MCF 10A (cell line): ENCODE measurements at regions of chr9 and their contacts with region 1.

Region 1: DNA sequence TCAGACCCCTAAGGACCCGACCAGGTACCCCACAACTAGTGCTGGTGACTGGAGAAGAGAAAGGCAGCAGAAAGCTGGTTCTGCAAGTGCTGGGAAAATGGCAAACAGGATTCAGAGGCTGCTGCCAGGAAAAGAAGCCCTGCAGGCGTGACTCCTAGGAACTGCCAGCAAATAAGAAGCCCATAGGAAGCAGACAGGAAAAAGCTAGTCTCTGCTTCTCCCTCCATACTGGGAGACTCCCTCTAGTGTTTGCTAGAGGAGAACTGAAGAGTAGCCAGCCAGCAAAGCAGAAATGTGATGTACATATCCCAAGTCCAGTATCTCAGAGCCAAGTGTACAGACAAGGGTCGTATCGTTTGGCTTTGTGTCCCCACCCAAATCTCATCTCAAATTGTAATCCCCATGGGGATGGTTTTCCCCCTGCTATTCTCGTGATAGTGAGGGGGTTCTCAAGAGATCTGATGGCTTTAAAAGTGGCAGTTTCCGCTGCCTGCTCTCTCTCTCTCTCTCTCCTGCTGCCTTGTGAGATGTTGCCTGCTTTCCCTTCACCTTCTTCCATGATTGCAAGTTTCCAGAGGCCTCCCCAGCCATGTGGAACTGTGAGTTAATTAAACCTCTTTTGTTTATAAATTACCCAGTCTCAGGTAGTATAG is 38.1 kb upstream of the TUSC1 start:
- DNase-seq: peak; percentile 80
- H3K4me3 Mint-ChIP-seq: no peak overlapping the region
- H3K27ac Mint-ChIP-seq: no peak overlapping the region
- H3K4me1 Mint-ChIP-seq: no peaks in the 10 kb centered on the region
- H3K27me3 Mint-ChIP-seq: peaks cover 40% of the 10 kb centered on the region
- CTCF ChIP-seq: peak; percentile 29

Region 2: DNA sequence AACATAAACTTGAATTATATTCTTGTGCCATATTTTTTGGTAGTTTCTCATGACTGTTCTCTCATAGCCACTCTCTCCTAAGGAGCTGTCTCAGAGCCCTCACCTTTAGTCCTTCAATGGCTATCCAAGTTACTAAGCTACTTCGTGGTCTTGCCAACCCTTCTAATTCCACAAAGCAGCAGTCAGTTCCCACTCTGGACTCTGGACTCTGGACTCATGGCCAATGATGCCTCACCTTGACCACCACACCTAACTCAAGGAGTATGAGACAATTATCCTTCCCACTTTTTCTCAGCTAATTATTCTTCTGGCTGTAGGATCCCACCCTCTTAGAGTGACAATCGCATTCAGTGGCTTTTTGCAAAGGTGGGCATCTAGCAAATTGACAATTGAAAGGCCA is 80.3 kb before region 1 on chr9:
- CTCF ChIA-PET with region 1: interaction called, 3 read pairs
- POLR2A ChIA-PET with region 1: no interaction called
- intact Hi-C with region 1: loop called (anchors 10 kb)
- DNase-seq: no peak
- H3K4me3 Mint-ChIP-seq: no peak overlapping the region
- H3K27ac Mint-ChIP-seq: no peak overlapping the region
- H3K4me1 Mint-ChIP-seq: no peaks in the 10 kb centered on the region
- H3K27me3 Mint-ChIP-seq: peaks cover 15% of the 10 kb centered on the region
- CTCF ChIP-seq: no peak

Region 3: GRCh38 chr9:25658571-25658970 is 57.8 kb before region 1 on chr9:
- CTCF ChIA-PET with region 1: no interaction called
- POLR2A ChIA-PET with region 1: no interaction called
- intact Hi-C with region 1: no loop called
- DNase-seq: no peak
- H3K4me3 Mint-ChIP-seq: no peak overlapping the region
- H3K27ac Mint-ChIP-seq: no peak overlapping the region
- H3K4me1 Mint-ChIP-seq: no peaks in the 10 kb centered on the region
- H3K27me3 Mint-ChIP-seq: no peaks in the 10 kb centered on the region
- CTCF ChIP-seq: no peak

Region 4: GRCh38 chr9:25678162-25678666 is 38.1 kb before region 1 on chr9 and contains the start of gene TUSC1:
- CTCF ChIA-PET with region 1: interaction called, 5 read pairs
- POLR2A ChIA-PET with region 1: interaction called, 5 read pairs
- intact Hi-C with region 1: loop called (anchors 5 kb)
- DNase-seq: peak; percentile 90
- H3K4me3 Mint-ChIP-seq: peak within 1 kb of the TSS; percentile 83
- H3K27ac Mint-ChIP-seq: peak within 1 kb of the TSS; percentile 93
- H3K4me1 Mint-ChIP-seq: peaks cover 10% of the 10 kb centered on the region
- H3K27me3 Mint-ChIP-seq: no peaks in the 10 kb centered on the region
- CTCF ChIP-seq: no peak
- total RNA-seq, gene TUSC1: 10.3 and 12.4 TPM in 2 replicates

Region 5: GRCh38 chr9:25703701-25704357 is 12.5 kb before region 1 on chr9:
- CTCF ChIA-PET with region 1: interaction called, 13 read pairs
- POLR2A ChIA-PET with region 1: no interaction called
- intact Hi-C with region 1: no loop called
- DNase-seq: no peak
- H3K4me3 Mint-ChIP-seq: no peak overlapping the region
- H3K27ac Mint-ChIP-seq: no peak overlapping the region
- H3K4me1 Mint-ChIP-seq: no peaks in the 10 kb centered on the region
- H3K27me3 Mint-ChIP-seq: peaks cover 33% of the 10 kb centered on the region
- CTCF ChIP-seq: no peak

Region 6: DNA sequence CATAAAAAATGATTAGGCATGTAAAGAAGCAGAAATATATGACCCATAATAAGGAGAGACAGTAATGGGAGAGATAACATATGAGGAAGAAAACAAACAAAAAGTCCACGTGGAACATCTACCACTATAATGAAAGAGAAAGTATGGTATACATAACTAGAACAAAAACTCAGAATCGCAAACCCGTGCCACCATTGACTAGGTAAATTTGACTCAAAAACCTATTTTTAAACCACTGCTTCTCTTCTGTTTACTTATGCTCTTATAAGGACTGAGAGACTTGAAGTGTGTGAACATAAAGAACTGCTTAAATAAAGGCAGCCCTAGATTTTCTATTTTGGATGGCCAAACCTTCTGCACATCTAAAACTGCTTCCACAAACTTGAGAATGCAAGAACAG is 845.6 kb after region 1 on chr9:
- CTCF ChIA-PET with region 1: no interaction called
- POLR2A ChIA-PET with region 1: no interaction called
- intact Hi-C with region 1: no loop called
- DNase-seq: no peak
- H3K4me3 Mint-ChIP-seq: no peak overlapping the region
- H3K27ac Mint-ChIP-seq: no peak overlapping the region
- H3K4me1 Mint-ChIP-seq: no peaks in the 10 kb centered on the region
- H3K27me3 Mint-ChIP-seq: no peaks in the 10 kb centered on the region
- CTCF ChIP-seq: no peak